ENCODE measurements at regions of chr6 and their contacts with region 1.

Region 1: DNA sequence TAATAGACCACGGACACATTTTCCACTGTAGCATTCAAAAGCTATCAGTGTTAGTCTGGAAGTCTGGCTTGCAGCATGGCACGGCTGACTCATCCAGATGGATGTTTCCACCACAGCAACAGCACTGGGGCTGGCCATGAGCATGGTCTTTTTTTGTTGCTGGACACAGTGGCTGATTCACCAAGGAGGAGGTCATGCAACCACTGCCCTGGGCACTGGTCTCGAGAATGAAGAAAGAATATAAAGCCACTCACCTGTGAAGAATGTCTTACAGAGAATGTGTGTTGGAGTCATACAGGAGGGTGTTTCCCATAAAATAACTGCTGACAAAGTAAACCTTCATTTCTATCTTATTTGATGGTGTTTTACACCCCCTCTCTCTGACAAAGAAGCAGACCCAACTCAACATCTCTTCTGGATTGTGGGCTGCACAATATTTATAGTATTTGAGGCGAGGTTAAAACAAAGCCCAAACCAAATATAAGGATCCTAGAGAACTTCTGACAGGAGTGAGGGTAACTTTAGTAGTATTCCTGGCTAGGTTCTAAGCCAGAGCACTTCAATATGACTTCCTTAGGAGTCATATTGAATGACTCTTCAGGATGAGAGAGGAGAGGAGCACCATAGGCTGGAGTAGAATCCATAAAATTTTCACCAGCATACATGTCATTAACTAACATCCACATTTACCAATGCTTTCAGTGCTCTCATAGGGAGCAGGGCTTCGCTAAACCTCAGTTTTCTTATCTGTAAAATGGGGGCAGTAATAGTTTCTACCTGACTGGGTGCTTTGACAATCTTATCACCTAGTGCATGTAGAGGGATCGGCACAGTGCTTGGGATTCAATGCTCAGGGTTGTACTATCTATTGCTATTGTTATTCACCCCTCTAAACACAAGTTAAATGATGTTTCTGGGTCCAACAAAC is 121.4 kb downstream of the KIF13A start:
- DNase-seq: peak; percentile 77
- ATAC-seq: peak; percentile 80

Region 2: GRCh38 chr6:17904495-17905090 is 38.5 kb after region 1 on chr6:
- intact Hi-C with region 1: loop called (anchors 5 kb)
- DNase-seq: no peak
- ATAC-seq: no peak

Region 3: DNA sequence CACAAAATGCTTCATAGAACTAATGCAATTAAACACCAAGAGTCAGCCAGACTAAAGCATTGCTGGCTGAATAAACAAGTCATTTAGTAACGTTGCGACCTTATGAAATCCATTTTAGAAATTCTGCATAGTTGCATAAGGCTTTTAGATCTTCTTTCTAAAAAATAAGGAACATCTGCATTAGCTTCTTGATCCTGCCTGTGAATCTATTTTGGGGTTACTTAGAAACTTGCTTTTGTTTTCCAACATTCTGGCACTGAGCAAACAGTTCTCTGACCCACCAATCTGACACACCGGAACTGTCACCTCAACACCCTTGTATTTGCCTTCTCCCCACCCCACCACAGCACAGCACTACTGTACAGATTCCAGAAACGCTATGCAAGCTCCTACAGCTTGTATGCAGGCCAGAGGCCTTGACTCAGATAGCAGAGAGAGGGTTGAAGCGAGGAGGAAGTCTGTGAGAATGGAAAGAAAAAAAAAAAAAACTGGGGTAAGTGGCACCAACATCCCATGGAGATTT is 66.3 kb after region 1 on chr6:
- intact Hi-C with region 1: loop called (anchors 5 kb)
- DNase-seq: peak; percentile 64
- ATAC-seq: peak; percentile 95

Region 4: DNA sequence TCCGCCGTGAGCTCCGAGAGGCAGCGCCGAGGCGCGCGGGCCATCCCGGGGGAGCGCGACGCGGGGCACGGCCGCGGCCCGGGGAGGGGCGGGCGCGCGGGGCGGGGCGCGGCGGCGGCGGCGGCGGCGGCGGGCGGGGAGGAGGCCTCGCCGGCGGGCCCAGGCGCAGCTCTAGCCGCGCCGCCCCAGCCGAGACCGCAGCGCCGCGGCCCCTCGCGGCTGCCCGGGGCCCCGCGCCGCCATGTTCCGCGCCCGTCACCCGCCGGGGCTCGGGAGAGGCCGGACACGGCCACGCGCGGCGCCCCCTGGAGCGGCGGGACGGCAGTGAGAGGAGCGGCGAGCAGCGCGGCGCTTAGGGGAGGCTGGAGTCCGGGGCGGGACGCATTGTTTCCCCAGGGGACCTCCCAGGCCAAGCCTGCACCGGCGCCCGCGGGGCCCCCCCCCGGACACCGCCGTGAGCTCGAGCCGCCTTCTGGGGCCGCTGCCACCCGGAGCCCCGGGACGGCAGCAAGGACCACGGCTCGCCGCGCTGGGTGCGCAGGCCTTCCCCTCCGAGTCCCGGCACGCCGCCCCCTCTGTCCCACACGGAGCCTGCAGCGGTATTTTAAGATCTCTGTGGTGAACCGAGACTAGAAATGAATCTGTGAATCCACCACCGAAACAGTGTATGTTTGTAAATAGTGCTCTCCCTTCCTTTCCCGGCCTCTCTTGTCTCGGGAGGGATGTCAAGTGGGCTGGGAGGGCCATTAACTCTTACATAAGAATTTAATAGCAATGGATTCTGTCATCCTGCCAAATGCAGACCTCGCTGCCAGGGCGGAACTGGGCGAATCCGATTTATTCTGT is 121.7 kb after region 1 on chr6 and contains the start of gene KIF13A:
- intact Hi-C with region 1: loop called (anchors 2 kb)
- DNase-seq: peak; percentile 85
- ATAC-seq: peak; percentile 75
- total RNA-seq, gene KIF13A: 57.3 TPM

Region 5: DNA sequence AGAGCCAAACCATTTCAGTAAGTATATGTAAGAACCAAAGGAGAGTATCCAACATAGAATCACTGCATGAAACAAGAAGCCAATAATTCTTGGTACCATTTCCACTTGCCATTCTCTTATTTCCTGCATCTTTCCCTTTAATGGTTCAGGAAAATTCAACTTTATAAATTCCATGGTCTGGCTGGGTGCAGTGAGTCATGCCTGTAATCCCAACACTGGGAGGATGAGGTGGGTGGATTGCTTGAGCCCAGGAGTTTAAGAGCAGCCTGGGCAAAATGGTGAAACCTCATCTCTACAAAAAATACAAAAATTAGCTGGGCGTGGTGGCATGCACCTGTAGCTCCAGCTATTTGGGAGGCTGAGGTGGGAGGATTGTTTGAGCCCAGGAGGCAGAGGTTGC is 235.2 kb after region 1 on chr6:
- intact Hi-C with region 1: no loop called
- DNase-seq: no peak
- ATAC-seq: no peak

Measured in Right ventricle myocardium inferior (tissue), 1 donor.